Dendritic cell treated with granulocyte-macrophage colony-stimulating factor and Interleukin-4, amounts not matched to agents 40 ng/mL and 50 ng/mL, for 4 days (primary cell): ENCODE measurements at regions of chr5 and their contacts with region 1.

Region 1: DNA sequence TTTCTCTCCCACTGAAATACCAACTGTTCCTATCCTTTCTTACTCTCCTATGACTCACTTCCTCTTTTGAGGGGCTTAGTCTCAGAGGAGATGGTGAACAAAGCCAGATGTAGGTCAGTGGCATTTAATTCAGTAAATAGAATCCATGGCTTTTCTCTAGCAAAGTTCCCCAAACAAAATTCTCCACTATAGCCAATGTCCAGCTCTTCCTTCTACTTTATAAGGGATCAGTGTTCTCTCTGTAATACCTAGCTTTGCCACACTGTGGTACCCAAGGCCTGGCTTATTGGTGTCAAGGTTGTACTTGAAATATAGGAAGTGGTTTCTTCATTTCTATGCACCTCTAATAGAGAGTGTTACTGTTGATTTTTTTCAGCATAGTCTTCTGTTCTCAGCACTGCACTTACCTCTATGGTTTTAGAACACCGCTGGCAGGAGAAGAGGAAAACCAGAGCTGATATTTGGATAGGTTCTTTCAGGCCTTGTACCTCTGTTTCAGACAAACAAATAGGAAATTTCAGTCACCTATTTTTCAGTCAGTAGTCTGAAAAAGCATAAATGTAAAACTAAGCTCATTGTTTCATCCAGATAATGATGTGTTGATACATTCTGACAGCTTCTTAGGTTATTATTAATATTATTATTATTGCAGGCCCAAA is 40.6 kb upstream of the ITGA2 start:
- H3K4me3 Mint-ChIP-seq: no peak overlapping the region
- H3K27ac Mint-ChIP-seq: no peak overlapping the region
- H3K4me1 Mint-ChIP-seq: no peaks in the 10 kb centered on the region
- H3K27me3 Mint-ChIP-seq: no peaks in the 10 kb centered on the region

Region 2: DNA sequence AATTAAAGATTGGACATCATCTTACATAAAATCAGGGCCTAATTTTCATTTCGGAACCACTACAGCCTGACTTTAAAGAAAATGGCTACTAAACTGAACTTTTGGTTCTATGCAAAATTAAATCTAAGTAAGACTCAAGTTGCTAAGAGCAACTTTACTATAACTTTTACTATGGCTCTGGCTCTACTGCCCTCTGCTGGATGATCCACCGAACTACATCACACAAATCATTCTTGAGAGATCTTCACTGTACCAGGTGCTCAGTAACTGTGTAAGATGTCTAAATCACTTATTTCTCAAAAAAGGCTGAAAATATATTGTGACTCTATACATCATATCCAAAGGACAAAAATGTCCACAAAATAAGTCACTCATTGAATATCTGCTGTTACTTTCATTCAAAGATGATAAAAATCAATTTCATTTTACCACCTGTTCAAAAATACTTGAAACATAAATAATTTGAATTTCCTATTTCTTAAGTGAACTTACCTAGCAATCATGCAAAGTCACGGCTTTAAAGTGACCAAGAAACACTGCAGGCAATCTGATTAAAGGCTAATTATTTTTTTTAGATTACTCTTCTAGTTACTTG is 147.5 kb after region 1 on chr5:
- intact Hi-C with region 1: loop called (anchors 1 kb)
- H3K4me3 Mint-ChIP-seq: no peak overlapping the region
- H3K27ac Mint-ChIP-seq: no peak overlapping the region
- H3K4me1 Mint-ChIP-seq: no peaks in the 10 kb centered on the region
- H3K27me3 Mint-ChIP-seq: no peaks in the 10 kb centered on the region